Mammary epithelial cell (primary cell): ENCODE measurements at regions of chr19 and their contacts with region 1.

Region 1: GRCh38 chr19:43754503-43755255 is at the start of gene SMG9:
- DNase-seq: peak; percentile 98
- H3K4me3 ChIP-seq: peak within 1 kb of the TSS; percentile 40 to 70 (median 60)
- H3K27ac ChIP-seq: peak within 1 kb of the TSS; percentile 99
- H3K4me1 ChIP-seq: peaks cover 66% of the 10 kb centered on the region
- H3K27me3 ChIP-seq: no peaks in the 10 kb centered on the region
- CTCF ChIP-seq: no peak
- total RNA-seq, gene SMG9: 7.5 to 62.7 TPM

Region 2: DNA sequence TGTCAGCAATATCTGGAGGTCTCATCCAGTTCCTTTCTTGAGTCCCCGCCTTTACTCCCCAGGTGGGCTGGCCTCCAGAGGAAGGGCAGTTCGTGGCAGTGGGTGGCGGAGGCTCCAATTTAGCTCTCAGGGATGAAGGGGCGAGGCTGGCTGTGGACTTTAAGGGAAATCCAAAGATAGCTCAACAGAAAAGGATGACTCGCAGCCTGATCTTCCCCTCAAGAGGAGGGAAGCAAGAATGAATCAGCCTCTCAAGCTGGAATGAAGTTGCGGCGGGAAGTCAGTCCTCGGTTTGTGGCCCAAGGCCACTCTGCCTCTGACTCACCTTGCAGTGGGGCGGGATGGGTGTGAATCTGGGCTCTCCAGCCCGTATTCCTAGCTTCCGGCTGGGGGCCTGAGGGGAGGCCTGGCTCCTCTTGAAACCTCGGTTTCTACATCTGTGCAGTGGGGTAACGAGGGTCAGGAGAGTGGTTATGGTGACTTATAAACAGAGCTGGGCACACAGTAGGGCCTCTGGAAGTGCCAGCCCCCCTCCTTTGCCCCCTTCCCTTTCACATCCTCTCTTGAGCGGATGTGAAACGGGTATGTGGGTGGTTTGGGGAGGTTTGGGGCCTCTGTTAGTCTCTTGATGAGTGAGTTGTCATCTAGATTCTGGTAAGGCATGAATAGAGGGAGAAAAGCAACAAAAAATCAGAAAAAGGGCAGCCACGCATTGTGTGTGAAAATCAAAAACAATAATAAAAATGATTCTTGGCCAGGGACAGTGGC is 10.6 kb after region 1 on chr19:
- CTCF ChIA-PET with region 1: interaction called, 6 read pairs
- dilution Hi-C with region 1: no loop called
- in situ Hi-C with region 1: no loop called
- intact Hi-C with region 1: loop called (anchors 1 kb)
- DNase-seq: peak; percentile 98
- H3K4me3 ChIP-seq: no peak overlapping the region
- H3K27ac ChIP-seq: peak overlapping the region; percentile 82
- H3K4me1 ChIP-seq: peaks cover 74% of the 10 kb centered on the region
- H3K27me3 ChIP-seq: no peaks in the 10 kb centered on the region
- CTCF ChIP-seq: no peak